ENCODE measurements at regions of chr3 and their contacts with region 1.

Region 1: GRCh38 chr3:177359593-177360357 is 162.5 kb upstream of the TBL1XR1 start:
- DNase-seq: peak; percentile 99
- H3K4me3 ChIP-seq: peak overlapping the region; percentile 63
- H3K27ac ChIP-seq: peak overlapping the region; percentile 79
- H3K4me1 ChIP-seq: peaks cover 62% of the 10 kb centered on the region
- CTCF ChIP-seq: peak; percentile 22; the same call in 1 of the 2 replicates

Region 2: DNA sequence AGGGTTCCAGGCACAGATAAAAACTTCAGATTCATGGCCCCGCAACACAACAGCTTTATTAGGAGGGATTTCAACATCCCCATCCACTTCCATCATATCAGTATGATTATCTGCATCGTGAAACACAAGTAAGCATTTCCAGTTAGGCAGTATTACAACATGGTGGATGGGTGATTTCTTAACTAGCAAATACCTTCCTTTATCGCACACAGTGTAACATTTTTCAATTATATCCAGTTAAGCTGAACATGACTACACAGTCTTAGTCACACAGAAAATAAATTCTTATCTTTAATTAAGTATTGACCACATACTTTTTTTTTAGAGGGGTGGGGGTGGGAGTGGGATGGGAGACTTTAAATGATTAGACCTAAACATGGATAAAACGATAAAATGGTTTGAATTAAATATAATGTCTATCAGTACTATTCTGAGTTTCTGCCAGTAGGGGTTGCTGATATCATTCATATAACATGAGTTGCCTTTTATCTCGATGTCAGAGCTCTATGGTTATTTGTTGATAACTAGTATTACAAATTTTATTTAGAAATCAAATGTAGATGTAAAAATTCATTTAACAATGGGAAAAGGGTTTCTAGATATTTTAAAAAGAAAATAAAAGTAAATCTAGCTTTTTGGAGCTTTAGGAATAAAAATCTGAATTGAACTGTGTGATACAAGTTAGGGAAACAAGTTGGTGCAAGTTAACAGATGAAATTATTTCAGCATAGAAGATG is 309.1 kb before region 1 on chr3:
- CTCF ChIA-PET with region 1: no interaction called
- POLR2A ChIA-PET with region 1: interaction called, 11 read pairs
- intact Hi-C with region 1: loop called (anchors 1 kb)
- DNase-seq: peak; percentile 67
- H3K4me3 ChIP-seq: no peak overlapping the region
- H3K27ac ChIP-seq: peak overlapping the region; percentile 64
- H3K4me1 ChIP-seq: peaks cover 22% of the 10 kb centered on the region
- CTCF ChIP-seq: peak; percentile 90

Region 3: DNA sequence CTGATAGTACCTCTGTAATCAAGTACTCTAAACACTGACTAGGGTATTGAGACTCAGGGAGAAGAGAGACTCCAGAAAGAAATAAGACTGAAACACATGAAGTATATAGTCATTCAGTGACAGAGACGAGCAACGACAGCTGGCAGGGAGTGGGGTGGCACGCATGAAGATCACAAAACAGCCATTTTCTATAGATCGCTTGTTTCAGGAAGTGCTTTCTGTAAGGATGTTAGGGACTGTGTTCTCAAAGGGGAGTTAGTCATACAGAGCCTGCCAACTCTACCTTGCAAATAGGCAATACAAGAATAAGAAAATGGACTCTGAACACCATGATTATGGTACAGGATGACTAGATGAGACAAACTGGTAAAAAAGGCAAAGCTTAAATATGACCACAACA is 302.0 kb before region 1 on chr3:
- CTCF ChIA-PET with region 1: no interaction called
- POLR2A ChIA-PET with region 1: interaction called, 15 read pairs
- intact Hi-C with region 1: no loop called
- DNase-seq: peak; percentile 58
- H3K4me3 ChIP-seq: peak overlapping the region; percentile 25
- H3K27ac ChIP-seq: peak overlapping the region; percentile 47
- H3K4me1 ChIP-seq: peaks cover 77% of the 10 kb centered on the region
- CTCF ChIP-seq: no peak

Region 4: DNA sequence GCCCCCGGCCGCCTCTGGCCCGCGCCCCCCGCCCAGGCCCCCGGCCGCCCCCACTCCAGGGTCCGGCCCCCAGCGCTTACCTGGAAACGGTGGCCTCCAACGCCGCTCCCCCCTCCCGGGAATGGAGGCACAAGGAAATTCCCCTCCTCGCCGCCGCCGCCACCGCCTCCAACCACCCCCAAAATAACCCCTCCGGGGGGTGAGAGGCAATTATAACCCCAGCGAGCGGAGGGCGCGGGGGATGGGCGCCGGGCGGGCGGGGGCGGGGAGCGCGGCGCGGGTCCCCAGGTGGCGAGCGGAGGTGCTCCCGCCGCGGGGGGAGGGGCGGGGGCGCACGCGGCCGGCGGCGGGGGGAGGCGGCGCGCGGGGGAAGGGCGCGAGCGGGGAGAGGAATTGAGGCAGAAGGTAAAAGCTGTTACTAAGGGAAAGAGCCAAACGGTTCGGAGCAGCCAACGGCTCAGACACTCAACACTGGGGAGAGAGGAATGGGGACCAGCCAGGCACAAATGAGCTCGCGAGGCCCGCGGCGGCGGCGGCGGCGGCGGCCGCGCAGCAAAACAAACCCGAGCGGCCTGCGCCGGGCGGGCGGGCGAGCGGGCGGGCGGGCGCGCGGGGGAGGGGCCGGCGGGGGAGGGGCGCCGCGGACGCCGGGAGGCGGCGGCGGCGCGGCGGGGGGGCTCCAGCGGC is 162.6 kb before region 1 on chr3 and contains the start of gene TBL1XR1:
- CTCF ChIA-PET with region 1: interaction called, 3 read pairs
- POLR2A ChIA-PET with region 1: interaction called, 17 read pairs
- intact Hi-C with region 1: loop called (anchors 1 kb)
- DNase-seq: peak; percentile 94
- H3K4me3 ChIP-seq: peak within 1 kb of the TSS; percentile 100
- H3K27ac ChIP-seq: peak within 1 kb of the TSS; percentile 95
- H3K4me1 ChIP-seq: peaks cover 56% of the 10 kb centered on the region
- CTCF ChIP-seq: no peak
- total RNA-seq, gene TBL1XR1: 103 and 121 TPM in 2 replicates

Region 5: GRCh38 chr3:177281292-177282118 is 78.3 kb before region 1 on chr3:
- CTCF ChIA-PET with region 1: no interaction called
- POLR2A ChIA-PET with region 1: no interaction called
- intact Hi-C with region 1: loop called (anchors 2 kb)
- DNase-seq: peak; percentile 82
- H3K4me3 ChIP-seq: peak overlapping the region; percentile 23
- H3K27ac ChIP-seq: peak overlapping the region; percentile 67
- H3K4me1 ChIP-seq: peaks cover 29% of the 10 kb centered on the region
- CTCF ChIP-seq: no peak

Region 6: DNA sequence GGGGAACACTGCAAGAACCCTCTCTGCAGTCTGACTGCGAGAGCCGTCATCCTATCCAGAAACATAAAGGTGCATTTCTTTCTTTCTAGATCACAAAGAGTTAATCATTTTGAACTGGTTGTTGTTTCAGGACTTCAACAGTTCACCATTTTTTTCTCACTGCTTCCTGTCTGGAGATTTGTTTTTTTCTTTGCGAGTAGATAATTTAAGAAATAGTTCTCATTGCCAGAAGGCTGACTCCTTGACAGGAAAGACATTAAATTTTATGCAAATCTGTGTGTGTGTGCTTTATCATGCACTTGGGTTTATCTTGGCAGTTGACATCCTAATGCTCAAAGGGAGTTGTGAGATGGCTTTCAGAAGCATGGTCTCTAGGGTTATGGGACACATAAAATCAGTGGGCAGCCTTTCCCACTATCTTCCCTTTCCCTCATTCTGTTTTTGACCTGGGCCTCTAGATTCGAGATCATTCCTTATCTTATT is 39.0 kb before region 1 on chr3:
- CTCF ChIA-PET with region 1: no interaction called
- POLR2A ChIA-PET with region 1: interaction called, 5 read pairs
- intact Hi-C with region 1: loop called (anchors 2 kb)
- DNase-seq: peak; percentile 80
- H3K4me3 ChIP-seq: peak overlapping the region; percentile 30
- H3K27ac ChIP-seq: peak overlapping the region; percentile 53
- H3K4me1 ChIP-seq: peaks cover 66% of the 10 kb centered on the region
- CTCF ChIP-seq: no peak

Region 7: GRCh38 chr3:177333533-177334520 is 25.9 kb before region 1 on chr3:
- CTCF ChIA-PET with region 1: no interaction called
- POLR2A ChIA-PET with region 1: no interaction called
- intact Hi-C with region 1: no loop called
- DNase-seq: no peak
- H3K4me3 ChIP-seq: no peak overlapping the region
- H3K27ac ChIP-seq: no peak overlapping the region
- H3K4me1 ChIP-seq: peaks cover 22% of the 10 kb centered on the region
- CTCF ChIP-seq: no peak

Region 8: DNA sequence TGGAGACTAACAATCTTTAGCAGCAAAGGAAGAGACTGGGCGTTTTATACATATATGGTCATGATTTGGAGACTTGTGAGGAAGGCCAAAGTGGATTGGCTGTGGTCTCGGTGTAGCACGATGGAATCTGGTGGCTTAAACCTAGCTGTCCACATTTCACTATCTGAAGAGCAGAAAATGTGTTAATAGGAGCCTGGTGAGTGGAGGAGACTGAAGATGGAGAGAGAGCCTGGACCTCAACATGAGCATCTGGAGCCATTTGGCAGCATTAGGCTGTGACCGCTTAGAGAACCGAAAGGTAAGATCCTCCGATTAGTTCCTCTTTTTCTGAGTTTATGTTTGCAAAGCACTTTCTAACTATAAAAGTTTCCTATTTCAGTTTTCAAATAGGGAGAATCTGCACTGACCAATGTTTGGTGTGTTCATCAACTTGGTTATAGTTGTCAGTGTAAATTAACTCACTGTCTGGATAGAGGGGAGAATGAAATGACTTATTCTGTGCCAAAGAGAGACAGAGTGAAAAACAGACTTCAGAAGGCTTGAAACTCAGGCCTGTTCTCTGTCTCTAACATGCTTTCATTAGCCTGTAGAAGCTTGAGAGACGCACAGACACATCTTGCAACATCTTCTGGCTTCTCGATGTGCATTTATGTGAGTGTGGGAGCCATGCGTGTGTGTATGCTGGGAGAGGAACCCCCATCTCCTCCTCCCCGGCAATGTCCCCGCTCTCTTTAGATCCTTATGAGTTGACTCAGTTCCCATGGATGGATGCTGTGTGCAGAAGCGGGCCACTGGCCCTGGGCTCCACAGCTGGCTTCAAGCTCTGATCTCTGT is 82.3 kb after region 1 on chr3:
- CTCF ChIA-PET with region 1: no interaction called
- POLR2A ChIA-PET with region 1: no interaction called
- intact Hi-C with region 1: loop called (anchors 5 kb)
- DNase-seq: peak; percentile 82
- H3K4me3 ChIP-seq: peak overlapping the region; percentile 22
- H3K27ac ChIP-seq: peak overlapping the region; percentile 59
- H3K4me1 ChIP-seq: peaks cover 16% of the 10 kb centered on the region
- CTCF ChIP-seq: no peak